Caco-2 (cell line): ENCODE measurements at regions of chr3 and their contacts with region 1.

Region 1: GRCh38 chr3:129490242-129491045 is 38.0 kb upstream of the RHO start:
- DNase-seq: peak; percentile 76 to 77
- H3K4me3 ChIP-seq: no peak overlapping the region
- H3K4me3 Mint-ChIP-seq: no peak overlapping the region
- H3K27ac Mint-ChIP-seq: peak overlapping the region; percentile 59
- H3K4me1 ChIP-seq: peaks cover 3% of the 10 kb centered on the region
- H3K4me1 Mint-ChIP-seq: peaks cover 17% of the 10 kb centered on the region
- H3K27me3 ChIP-seq: no peaks in the 10 kb centered on the region
- H3K27me3 Mint-ChIP-seq: no peaks in the 10 kb centered on the region
- CTCF ChIP-seq: peak; percentile 65 to 83

Region 2: DNA sequence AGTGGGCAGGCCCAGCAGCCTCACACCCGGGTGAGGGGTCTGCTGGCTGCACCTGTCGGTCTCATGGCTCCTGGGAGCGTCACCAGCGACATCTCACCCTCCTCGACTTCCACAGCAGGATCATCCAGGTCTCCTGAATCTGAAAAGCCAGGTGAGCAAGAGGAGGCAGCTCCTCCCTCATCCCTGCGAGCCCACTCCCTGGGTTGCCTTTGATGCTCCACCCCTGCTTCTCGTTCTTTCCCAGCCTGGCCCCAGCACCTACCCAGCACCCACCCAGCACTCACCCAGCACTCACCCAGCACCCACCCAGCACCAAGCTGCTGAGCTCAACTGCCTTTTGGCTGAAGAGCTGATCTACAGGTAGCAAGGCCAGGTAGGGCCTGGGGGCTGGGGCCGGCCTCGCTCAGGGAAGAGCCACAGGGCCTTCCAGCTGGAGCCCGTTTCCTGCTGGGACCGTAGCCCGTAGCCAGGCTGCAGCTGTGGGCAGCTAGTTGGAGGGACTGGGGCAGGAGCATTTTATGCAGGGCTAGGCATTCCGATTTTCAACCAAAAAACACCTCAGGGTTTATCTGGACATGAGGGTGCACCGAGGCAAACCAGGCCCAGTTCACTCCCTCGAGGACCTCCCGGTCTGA is 52.8 kb after region 1 on chr3 and contains the start of gene H1-8:
- CTCF ChIA-PET with region 1: no interaction called
- POLR2A ChIA-PET with region 1: no interaction called
- intact Hi-C with region 1: loop called (anchors 5 kb)
- DNase-seq: no peak
- H3K4me3 ChIP-seq: no peak within 1 kb of the TSS
- H3K4me3 Mint-ChIP-seq: no peak within 1 kb of the TSS
- H3K27ac Mint-ChIP-seq: no peak within 1 kb of the TSS
- H3K4me1 ChIP-seq: no peaks in the 10 kb centered on the region
- H3K4me1 Mint-ChIP-seq: peaks cover 6% of the 10 kb centered on the region
- H3K27me3 ChIP-seq: no peaks in the 10 kb centered on the region
- H3K27me3 Mint-ChIP-seq: no peaks in the 10 kb centered on the region
- CTCF ChIP-seq: no peak
- total RNA-seq, gene H1-8: not detected in 2 replicates

Region 3: GRCh38 chr3:129549412-129550204 is 59.2 kb after region 1 on chr3:
- CTCF ChIA-PET with region 1: interaction called, 13 read pairs
- POLR2A ChIA-PET with region 1: no interaction called
- intact Hi-C with region 1: loop called (anchors 5 kb)
- DNase-seq: no peak
- H3K4me3 ChIP-seq: no peak overlapping the region
- H3K4me3 Mint-ChIP-seq: no peak overlapping the region
- H3K27ac Mint-ChIP-seq: peak overlapping the region; percentile 33
- H3K4me1 ChIP-seq: no peaks in the 10 kb centered on the region
- H3K4me1 Mint-ChIP-seq: no peaks in the 10 kb centered on the region
- H3K27me3 ChIP-seq: no peaks in the 10 kb centered on the region
- H3K27me3 Mint-ChIP-seq: peaks cover 3% of the 10 kb centered on the region
- CTCF ChIP-seq: no peak

Region 4: GRCh38 chr3:129606636-129607390 is 116.4 kb after region 1 on chr3 and contains the start of gene PLXND1:
- CTCF ChIA-PET with region 1: interaction called, 11 read pairs
- POLR2A ChIA-PET with region 1: no interaction called
- intact Hi-C with region 1: loop called (anchors 5 kb)
- DNase-seq: peak; percentile 58 to 75
- H3K4me3 ChIP-seq: peak within 1 kb of the TSS; percentile 77
- H3K4me3 Mint-ChIP-seq: peak within 1 kb of the TSS; percentile 96
- H3K27ac Mint-ChIP-seq: peak within 1 kb of the TSS; percentile 47
- H3K4me1 ChIP-seq: peaks cover 22% of the 10 kb centered on the region
- H3K4me1 Mint-ChIP-seq: peaks cover 18% of the 10 kb centered on the region
- H3K27me3 ChIP-seq: no peaks in the 10 kb centered on the region
- H3K27me3 Mint-ChIP-seq: no peaks in the 10 kb centered on the region
- CTCF ChIP-seq: no peak
- total RNA-seq, gene PLXND1: 26.3 and 33.0 TPM in 2 replicates

Region 5: DNA sequence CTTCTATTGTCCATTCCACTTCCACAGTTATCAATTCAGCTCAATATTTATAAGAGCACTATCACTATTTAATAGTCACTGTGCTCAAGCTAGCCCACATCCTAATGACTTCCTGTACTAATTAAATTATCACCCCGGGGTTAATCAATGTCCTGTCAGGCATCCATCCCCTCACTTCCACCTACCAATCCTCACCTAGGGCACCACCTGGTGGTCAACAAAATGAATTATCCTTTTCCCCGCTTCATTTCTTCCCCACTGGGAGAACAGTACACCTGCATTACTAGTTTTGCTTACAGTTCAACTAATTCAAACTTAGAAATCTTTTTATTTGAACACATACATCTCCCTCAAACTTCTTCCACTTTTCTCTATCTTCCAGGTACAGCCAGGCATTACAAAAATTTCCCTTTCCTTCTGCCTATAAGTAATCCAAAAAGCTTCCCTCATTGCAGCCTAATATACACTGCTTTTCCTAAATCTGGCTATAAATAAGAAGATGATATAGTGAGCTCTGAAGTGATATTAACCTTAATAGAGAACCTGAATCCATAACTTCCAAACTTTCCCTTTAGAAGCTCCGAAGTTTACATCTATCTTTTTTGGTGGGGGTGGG is 334.6 kb after region 1 on chr3:
- CTCF ChIA-PET with region 1: interaction called, 9 read pairs
- POLR2A ChIA-PET with region 1: no interaction called
- intact Hi-C with region 1: loop called (anchors 1 kb)
- DNase-seq: peak; percentile 47 to 72
- H3K4me3 ChIP-seq: no peak overlapping the region
- H3K4me3 Mint-ChIP-seq: no peak overlapping the region
- H3K27ac Mint-ChIP-seq: no peak overlapping the region
- H3K4me1 ChIP-seq: peaks cover 12% of the 10 kb centered on the region; the same call in 1 of the 2 replicates
- H3K4me1 Mint-ChIP-seq: peaks cover 14% of the 10 kb centered on the region
- H3K27me3 ChIP-seq: no peaks in the 10 kb centered on the region
- H3K27me3 Mint-ChIP-seq: no peaks in the 10 kb centered on the region
- CTCF ChIP-seq: peak; percentile 58 to 77

Region 6: GRCh38 chr3:129911261-129911861 is 420.9 kb after region 1 on chr3:
- CTCF ChIA-PET with region 1: no interaction called
- POLR2A ChIA-PET with region 1: no interaction called
- intact Hi-C with region 1: no loop called
- DNase-seq: no peak
- H3K4me3 ChIP-seq: no peak overlapping the region
- H3K4me3 Mint-ChIP-seq: no peak overlapping the region
- H3K27ac Mint-ChIP-seq: no peak overlapping the region
- H3K4me1 ChIP-seq: peaks cover 11% of the 10 kb centered on the region
- H3K4me1 Mint-ChIP-seq: peaks cover 8% of the 10 kb centered on the region
- H3K27me3 ChIP-seq: no peaks in the 10 kb centered on the region
- H3K27me3 Mint-ChIP-seq: no peaks in the 10 kb centered on the region
- CTCF ChIP-seq: no peak